ENCODE measurements at regions of chr19 and their contacts with region 1.

Region 1: DNA sequence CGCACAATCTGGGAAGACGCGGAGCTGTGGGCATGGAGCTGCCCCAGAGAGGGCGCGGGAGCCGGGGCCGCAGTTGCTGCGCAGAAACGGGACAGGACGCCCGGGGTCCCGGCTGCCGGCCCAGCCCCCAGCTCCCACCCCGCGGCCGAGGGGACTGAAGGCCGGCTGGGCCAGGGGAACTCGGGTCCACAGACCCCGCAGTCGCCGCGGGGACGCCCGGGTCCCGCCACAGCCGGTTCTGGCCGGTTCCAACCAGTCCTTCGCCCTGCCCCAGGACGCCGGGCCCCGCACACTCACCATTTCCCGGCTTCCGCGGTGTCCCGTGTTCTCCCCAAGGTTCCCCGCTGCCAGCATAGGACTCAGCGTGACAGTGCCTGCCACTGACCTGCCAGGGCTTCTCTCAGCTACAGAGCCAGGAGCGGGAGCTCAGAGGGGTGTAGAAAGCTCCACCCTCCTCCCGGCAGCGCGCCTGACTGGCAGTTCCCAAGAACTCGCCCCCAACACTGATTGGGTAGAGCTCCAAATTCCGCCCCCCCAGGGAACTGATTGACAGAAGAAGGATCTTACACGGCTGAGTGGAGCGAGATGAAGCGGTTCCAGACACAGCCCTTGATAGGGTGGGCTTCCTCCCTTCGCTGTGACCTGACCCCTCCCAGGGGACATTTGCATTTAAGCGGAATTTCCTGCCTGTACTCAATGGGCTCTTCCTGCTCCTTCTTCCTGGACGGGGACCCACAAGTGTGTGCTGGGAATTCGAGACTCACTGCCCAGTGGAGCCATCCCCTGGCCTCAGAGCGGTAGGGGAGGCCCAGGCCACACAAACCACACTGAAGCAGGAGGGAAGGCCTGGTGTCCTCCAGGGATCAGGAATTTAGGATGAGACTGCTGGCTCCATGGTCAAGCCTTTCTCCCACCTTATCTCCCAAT is at the start of gene ZNF442:
- DNase-seq: peak; percentile 97
- total RNA-seq, gene ZNF442: 4.3 TPM

Region 2: GRCh38 chr19:12162882-12163806 is 202.4 kb before region 1 on chr19 and contains the start of gene ZNF136:
- intact Hi-C with region 1: loop called (anchors 10 kb)
- DNase-seq: peak; percentile 97
- total RNA-seq, gene ZNF136: 3.0 TPM

Region 3: GRCh38 chr19:12202250-12202649 is 163.2 kb before region 1 on chr19:
- intact Hi-C with region 1: loop called (anchors 10 kb)
- DNase-seq: no peak

Region 4: DNA sequence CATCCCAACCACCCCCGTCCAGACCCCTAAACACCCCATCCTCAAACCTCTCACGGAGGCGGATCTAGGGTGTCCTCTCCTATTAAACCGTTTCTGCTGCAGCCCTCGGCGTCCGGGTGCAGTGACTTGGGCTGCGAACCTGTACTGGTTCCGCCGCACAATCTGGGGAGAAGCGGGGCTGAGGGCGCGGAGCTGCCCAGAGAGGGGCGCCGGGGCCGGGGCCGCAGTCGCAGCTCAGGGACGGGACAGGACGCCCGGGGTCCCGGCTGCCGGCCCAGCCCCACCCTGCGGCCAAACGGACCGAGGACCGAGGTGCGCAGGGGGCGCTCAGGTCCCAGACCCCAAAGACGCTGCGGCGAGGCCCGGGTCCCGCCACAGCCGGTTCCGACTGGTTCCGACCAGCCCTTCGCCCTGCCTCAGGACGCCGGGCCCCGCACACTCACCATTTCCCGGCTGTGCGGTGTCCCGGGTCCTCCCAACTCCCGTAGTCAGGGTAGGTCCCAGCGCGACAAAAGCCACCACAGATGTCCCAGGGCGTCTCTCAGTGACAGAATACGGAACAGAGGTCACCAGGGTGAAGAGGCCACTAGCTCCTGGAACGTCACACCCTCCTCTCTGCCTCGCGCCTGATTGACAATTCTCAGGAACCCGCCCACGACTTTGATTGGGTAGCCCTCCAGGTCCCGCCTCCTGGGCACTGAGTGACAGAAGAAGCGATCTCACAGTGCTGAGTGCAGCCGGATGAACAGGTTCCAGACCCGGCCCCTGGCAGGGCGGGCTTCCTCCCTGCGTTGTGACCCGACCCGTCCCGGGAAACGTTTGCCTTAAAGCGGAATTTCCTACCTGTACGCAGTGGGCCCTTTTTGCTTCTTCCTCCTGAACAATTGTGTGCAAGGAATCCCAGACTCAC is 71.0 kb before region 1 on chr19 and contains the start of gene ZNF44:
- intact Hi-C with region 1: loop called (anchors 1 kb)
- DNase-seq: peak; percentile 99
- total RNA-seq, gene ZNF44: 10.8 TPM

Region 5: GRCh38 chr19:12333162-12334159 is 32.0 kb before region 1 on chr19 and contains the start of gene ZNF563:
- intact Hi-C with region 1: loop called (anchors 2 kb)
- DNase-seq: peak; percentile 98
- total RNA-seq, gene ZNF563: 3.7 TPM